ENCODE measurements at regions of chr20 and their contacts with region 1.

Region 1: DNA sequence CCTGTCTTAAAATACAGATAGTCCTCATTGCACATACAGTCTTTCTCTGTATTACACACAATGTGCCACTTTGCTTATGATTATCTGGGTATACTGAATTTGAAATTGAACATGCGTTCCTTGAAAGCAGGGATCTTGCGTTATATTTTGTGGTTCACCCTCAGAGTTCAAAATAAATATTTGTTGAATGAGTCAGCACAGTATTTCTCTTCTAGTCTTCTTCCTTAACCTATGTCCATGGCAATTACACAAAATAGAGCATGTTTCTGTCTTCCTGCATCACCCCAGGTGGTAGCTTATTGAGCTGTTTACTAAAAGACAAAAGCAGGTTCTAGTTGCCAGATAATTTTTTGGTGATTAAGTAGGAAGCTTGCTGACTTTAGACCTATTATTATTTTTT is 272.9 kb upstream of the FERMT1 start:
- DNase-seq: peak; percentile 3
- ATAC-seq: no peak
- H3K4me3 ChIP-seq: no peak overlapping the region
- H3K27ac ChIP-seq: no peak overlapping the region
- H3K4me1 ChIP-seq: no peaks in the 10 kb centered on the region
- H3K27me3 ChIP-seq: 0 out of 2 replicates have a peak, but pooled peaks cover 2% of the 10 kb centered on the region
- CTCF ChIP-seq: no peak
- POLR2A ChIP-seq: no peak
- RAD21 ChIP-seq: no peak

Region 2: GRCh38 chr20:6209093-6209492 is 186.6 kb before region 1 on chr20:
- CTCF ChIA-PET with region 1: no interaction called
- POLR2A ChIA-PET with region 1: no interaction called
- dilution Hi-C with region 1: no loop called
- in situ Hi-C with region 1: no loop called
- intact Hi-C with region 1: no loop called
- DNase-seq: no peak
- ATAC-seq: no peak
- H3K4me3 ChIP-seq: no peak overlapping the region
- H3K27ac ChIP-seq: no peak overlapping the region
- H3K4me1 ChIP-seq: no peaks in the 10 kb centered on the region
- H3K27me3 ChIP-seq: no peaks in the 10 kb centered on the region
- CTCF ChIP-seq: no peak
- POLR2A ChIP-seq: no peak
- RAD21 ChIP-seq: no peak

Region 3: GRCh38 chr20:6381887-6382286 is 13.8 kb before region 1 on chr20:
- CTCF ChIA-PET with region 1: interaction called, 19 read pairs
- POLR2A ChIA-PET with region 1: no interaction called
- dilution Hi-C with region 1: no loop called
- in situ Hi-C with region 1: no loop called
- intact Hi-C with region 1: no loop called
- DNase-seq: peak; percentile 44
- ATAC-seq: peak; percentile 98
- H3K4me3 ChIP-seq: no peak overlapping the region
- H3K27ac ChIP-seq: no peak overlapping the region
- H3K4me1 ChIP-seq: peaks cover 3% of the 10 kb centered on the region
- H3K27me3 ChIP-seq: no peaks in the 10 kb centered on the region
- CTCF ChIP-seq: peak; percentile 56
- POLR2A ChIP-seq: no peak
- RAD21 ChIP-seq: no peak